Activated CD8-positive, alpha-beta memory T cell treated with anti-CD3 and anti-CD28 coated beads, Interleukin-2, amount 10 ng/mL, durations not matched to agents 7 days and 5 days (primary cell): ENCODE measurements at regions of chr11 and their contacts with region 1.

Region 1: GRCh38 chr11:4072668-4073285 is 21.8 kb upstream of the RRM1 start:
- DNase-seq: peak; percentile 59
- ATAC-seq: peak; percentile 80
- H3K4me3 Mint-ChIP-seq: no peak overlapping the region
- H3K27ac Mint-ChIP-seq: no peak overlapping the region
- H3K4me1 Mint-ChIP-seq: peaks cover 26% of the 10 kb centered on the region
- H3K27me3 Mint-ChIP-seq: no peaks in the 10 kb centered on the region

Region 2: GRCh38 chr11:3834664-3835461 is 237.9 kb before region 1 on chr11:
- CTCF ChIA-PET with region 1: interaction called, 42 read pairs
- DNase-seq: no peak
- ATAC-seq: no peak
- H3K4me3 Mint-ChIP-seq: peak overlapping the region; percentile 58
- H3K27ac Mint-ChIP-seq: peak overlapping the region; percentile 78
- H3K4me1 Mint-ChIP-seq: peaks cover 86% of the 10 kb centered on the region
- H3K27me3 Mint-ChIP-seq: no peaks in the 10 kb centered on the region

Region 3: DNA sequence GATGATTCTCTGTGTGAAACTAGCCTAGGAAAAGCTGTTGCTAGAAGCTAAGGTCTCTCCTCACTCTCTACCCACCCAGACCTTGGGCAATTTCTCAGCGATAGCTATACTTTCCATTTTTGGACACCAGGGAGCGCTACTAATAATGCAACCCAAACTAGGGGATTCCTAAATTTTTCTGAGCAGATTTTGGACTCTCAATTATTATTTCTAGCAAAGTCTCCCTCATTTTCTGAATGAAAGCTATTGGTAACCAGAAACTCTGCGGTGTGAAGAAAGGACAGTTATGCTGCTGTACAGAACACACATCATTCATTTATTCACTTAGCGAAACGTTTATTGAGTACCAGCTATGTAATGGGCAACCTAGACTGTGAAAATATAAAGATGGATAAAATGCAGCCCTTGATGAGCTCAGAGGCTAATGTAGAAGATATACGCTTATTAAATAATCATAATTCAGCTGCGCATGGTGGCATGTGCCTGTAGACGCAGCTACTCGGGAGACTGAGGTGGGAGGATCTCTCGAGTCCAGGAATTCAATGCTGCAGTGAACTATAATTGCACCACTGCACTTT is 223.4 kb before region 1 on chr11:
- CTCF ChIA-PET with region 1: interaction called, 474 read pairs
- DNase-seq: peak; percentile 60
- ATAC-seq: peak; percentile 71
- H3K4me3 Mint-ChIP-seq: no peak overlapping the region
- H3K27ac Mint-ChIP-seq: no peak overlapping the region
- H3K4me1 Mint-ChIP-seq: peaks cover 31% of the 10 kb centered on the region
- H3K27me3 Mint-ChIP-seq: no peaks in the 10 kb centered on the region

Region 4: DNA sequence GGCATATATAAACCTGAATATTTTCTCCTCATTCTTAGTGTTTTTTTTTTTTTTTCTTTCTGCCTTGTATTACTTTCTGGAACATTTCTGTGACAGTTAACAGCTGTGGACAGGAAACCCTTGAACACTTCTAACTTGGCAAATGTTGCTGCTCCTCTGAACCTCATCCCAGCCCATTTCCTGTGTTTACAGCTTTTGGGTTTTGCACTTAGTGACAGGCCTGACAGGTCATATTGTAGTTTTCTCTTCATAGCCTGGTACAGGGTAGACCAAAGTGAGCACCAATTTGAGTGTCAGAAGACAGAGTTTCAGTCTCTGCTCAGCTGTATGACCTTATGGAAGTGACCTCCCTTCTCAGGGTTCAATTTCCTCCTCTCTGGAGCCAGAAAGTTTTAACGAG is 125.7 kb before region 1 on chr11:
- CTCF ChIA-PET with region 1: interaction called, 39 read pairs
- DNase-seq: peak; percentile 88
- ATAC-seq: peak; percentile 80
- H3K4me3 Mint-ChIP-seq: peak overlapping the region; percentile 70
- H3K27ac Mint-ChIP-seq: peak overlapping the region; percentile 98
- H3K4me1 Mint-ChIP-seq: peaks cover 94% of the 10 kb centered on the region
- H3K27me3 Mint-ChIP-seq: no peaks in the 10 kb centered on the region

Region 5: DNA sequence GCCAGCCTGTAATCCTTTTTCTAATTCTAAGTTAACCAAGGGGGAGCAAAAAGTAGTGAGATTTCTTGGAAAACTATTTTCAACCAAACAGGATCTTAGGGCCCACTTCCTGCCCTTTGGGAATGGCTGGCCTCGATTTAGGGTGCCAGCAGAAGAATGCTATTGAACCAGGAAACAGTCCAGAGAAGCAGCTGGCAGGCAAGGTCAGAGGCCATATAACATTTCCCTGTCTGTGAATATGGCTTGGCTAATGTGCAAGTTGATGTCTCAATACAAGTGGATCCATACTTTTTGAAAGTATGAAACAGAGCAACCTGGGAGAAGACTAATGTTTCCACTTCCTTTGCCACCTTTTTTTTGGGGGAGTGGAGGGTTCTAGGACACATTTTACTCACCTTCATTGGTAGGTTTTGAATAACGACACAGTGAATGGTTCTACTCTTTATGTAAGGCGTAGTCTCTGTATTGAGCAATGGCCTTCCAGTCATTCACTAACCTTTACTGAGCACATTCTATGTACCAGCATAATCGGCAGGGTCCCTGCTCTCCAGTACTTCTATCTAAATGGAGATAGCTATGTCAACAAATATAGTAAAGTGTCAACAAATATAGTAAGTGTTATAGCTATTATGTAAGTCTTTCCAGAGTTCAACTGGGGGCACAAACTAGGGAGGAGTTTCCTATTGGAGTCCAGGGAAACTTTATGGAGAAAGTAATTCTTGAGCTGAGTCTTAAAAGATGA is 12.4 kb before region 1 on chr11:
- CTCF ChIA-PET with region 1: interaction called, 27 read pairs
- DNase-seq: no peak
- ATAC-seq: no peak
- H3K4me3 Mint-ChIP-seq: no peak overlapping the region
- H3K27ac Mint-ChIP-seq: no peak overlapping the region
- H3K4me1 Mint-ChIP-seq: peaks cover 27% of the 10 kb centered on the region
- H3K27me3 Mint-ChIP-seq: no peaks in the 10 kb centered on the region

Region 6: DNA sequence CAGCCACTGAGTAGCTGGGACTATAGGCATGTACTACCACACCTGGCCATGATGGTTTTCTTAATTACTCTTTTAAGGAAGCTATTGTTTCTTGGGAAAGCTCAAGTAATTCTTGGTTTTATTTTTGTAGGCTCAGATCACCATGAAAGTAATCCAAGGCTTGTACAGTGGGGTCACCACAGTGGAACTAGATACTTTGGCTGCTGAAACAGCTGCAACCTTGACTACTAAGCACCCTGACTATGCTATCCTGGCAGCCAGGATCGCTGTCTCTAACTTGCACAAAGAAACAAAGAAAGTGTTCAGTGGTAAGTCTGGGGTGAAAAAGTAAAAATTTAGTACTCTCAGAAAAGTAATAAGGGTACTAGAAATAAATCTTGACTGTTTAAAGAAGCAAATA is 33.1 kb after region 1 on chr11:
- CTCF ChIA-PET with region 1: no interaction called
- DNase-seq: no peak
- ATAC-seq: no peak
- H3K4me3 Mint-ChIP-seq: no peak overlapping the region
- H3K27ac Mint-ChIP-seq: no peak overlapping the region
- H3K4me1 Mint-ChIP-seq: peaks cover 22% of the 10 kb centered on the region
- H3K27me3 Mint-ChIP-seq: no peaks in the 10 kb centered on the region

Region 7: GRCh38 chr11:4469891-4470290 is 397.1 kb after region 1 on chr11:
- CTCF ChIA-PET with region 1: no interaction called
- DNase-seq: no peak
- ATAC-seq: no peak
- H3K4me3 Mint-ChIP-seq: no peak overlapping the region
- H3K27ac Mint-ChIP-seq: no peak overlapping the region
- H3K4me1 Mint-ChIP-seq: peaks cover 3% of the 10 kb centered on the region
- H3K27me3 Mint-ChIP-seq: peaks cover 28% of the 10 kb centered on the region